ENCODE measurements at regions of chr19 and their contacts with region 1.

Region 1: GRCh38 chr19:15555759-15556633 is 47.7 kb downstream of the CYP4F22 start:
- DNase-seq: peak; percentile 98
- H3K4me3 ChIP-seq: peak overlapping the region; percentile 71
- H3K27ac ChIP-seq: peak overlapping the region; percentile 53
- H3K4me1 ChIP-seq: peaks cover 4% of the 10 kb centered on the region; the same call in 1 of the 2 replicates
- H3K27me3 ChIP-seq: no peaks in the 10 kb centered on the region

Region 2: GRCh38 chr19:15091901-15092753 is 463.9 kb before region 1 on chr19:
- in situ Hi-C with region 1: loop called (anchors 10 kb)
- DNase-seq: peak; percentile 67
- H3K4me3 ChIP-seq: no peak overlapping the region
- H3K27ac ChIP-seq: no peak overlapping the region
- H3K4me1 ChIP-seq: no peaks in the 10 kb centered on the region
- H3K27me3 ChIP-seq: peaks cover 14% of the 10 kb centered on the region

Region 3: GRCh38 chr19:15173746-15174404 is 382.1 kb before region 1 on chr19:
- in situ Hi-C with region 1: loop called (anchors 5 kb)
- DNase-seq: peak; percentile 21
- H3K4me3 ChIP-seq: no peak overlapping the region
- H3K27ac ChIP-seq: no peak overlapping the region
- H3K4me1 ChIP-seq: no peaks in the 10 kb centered on the region
- H3K27me3 ChIP-seq: no peaks in the 10 kb centered on the region

Region 4: GRCh38 chr19:15663247-15663646 is 107.3 kb after region 1 on chr19:
- in situ Hi-C with region 1: no loop called
- DNase-seq: no peak
- H3K4me3 ChIP-seq: no peak overlapping the region
- H3K27ac ChIP-seq: no peak overlapping the region
- H3K4me1 ChIP-seq: no peaks in the 10 kb centered on the region
- H3K27me3 ChIP-seq: no peaks in the 10 kb centered on the region

Region 5: GRCh38 chr19:15702534-15702930 is 146.5 kb after region 1 on chr19:
- in situ Hi-C with region 1: no loop called
- DNase-seq: peak; percentile 26
- H3K4me3 ChIP-seq: no peak overlapping the region
- H3K27ac ChIP-seq: no peak overlapping the region
- H3K4me1 ChIP-seq: no peaks in the 10 kb centered on the region
- H3K27me3 ChIP-seq: no peaks in the 10 kb centered on the region

Measured in GM23248 (cell line).